ENCODE measurements at regions of chrX and their contacts with region 1.

Region 1: DNA sequence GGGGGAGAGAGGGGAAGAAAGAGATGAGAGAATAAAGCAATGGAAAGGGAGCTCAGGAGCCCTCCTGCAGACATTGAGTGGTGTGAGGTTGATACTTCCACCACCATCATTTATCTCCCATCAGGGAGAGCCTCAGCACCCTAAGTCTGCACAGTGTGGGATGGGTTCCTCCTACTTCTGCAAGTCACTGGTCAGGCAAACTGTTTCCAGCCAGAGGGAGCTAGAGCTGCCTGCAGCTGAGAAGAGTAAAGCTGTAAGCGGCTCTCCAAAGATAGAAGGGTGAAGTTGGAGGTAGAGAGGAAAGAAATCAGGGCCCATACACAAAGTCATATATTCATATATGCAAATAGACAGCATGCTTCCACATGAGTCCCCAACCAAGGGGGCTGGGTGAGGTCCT is 21.9 kb upstream of the ZNF81 start:
- DNase-seq: no peak
- H3K4me3 ChIP-seq: no peak overlapping the region
- H3K27ac ChIP-seq: no peak overlapping the region
- H3K4me1 ChIP-seq: no peaks in the 10 kb centered on the region
- H3K27me3 ChIP-seq: peaks cover 0 to 28% of the 10 kb centered on the region in 2 donors
- CTCF ChIP-seq: no peak
- POLR2A ChIP-seq: no peak

Region 2: GRCh38 chrX:47093248-47093647 is 721.6 kb before region 1 on chrX:
- intact Hi-C with region 1: loop called (anchors 5 kb)
- DNase-seq: no peak
- H3K4me3 ChIP-seq: no peak overlapping the region
- H3K27ac ChIP-seq: no peak overlapping the region
- H3K4me1 ChIP-seq: no peaks in the 10 kb centered on the region
- H3K27me3 ChIP-seq: peaks cover 0 to 14% of the 10 kb centered on the region in 2 donors
- CTCF ChIP-seq: peak in 2 of 3 donors; percentile 31 to 43
- POLR2A ChIP-seq: no peak

Region 3: GRCh38 chrX:47358387-47359065 is 456.3 kb before region 1 on chrX:
- intact Hi-C with region 1: no loop called
- DNase-seq: no peak
- H3K4me3 ChIP-seq: no peak overlapping the region
- H3K27ac ChIP-seq: no peak overlapping the region
- H3K4me1 ChIP-seq: no peaks in the 10 kb centered on the region
- H3K27me3 ChIP-seq: no peaks in the 10 kb centered on the region
- CTCF ChIP-seq: no peak
- POLR2A ChIP-seq: no peak